Caco-2 (cell line): ENCODE measurements at regions of chr4 and their contacts with region 1.

Region 1: GRCh38 chr4:108018040-108018883 is 28.6 kb downstream of the HADH start:
- DNase-seq: peak; percentile 69 to 76
- H3K4me3 ChIP-seq: no peak overlapping the region
- H3K4me3 Mint-ChIP-seq: no peak overlapping the region
- H3K27ac Mint-ChIP-seq: no peak overlapping the region
- H3K4me1 ChIP-seq: no peaks in the 10 kb centered on the region
- H3K4me1 Mint-ChIP-seq: no peaks in the 10 kb centered on the region
- H3K27me3 ChIP-seq: no peaks in the 10 kb centered on the region
- H3K27me3 Mint-ChIP-seq: no peaks in the 10 kb centered on the region
- CTCF ChIP-seq: peak; percentile 69 to 70

Region 2: GRCh38 chr4:108181704-108182103 is 163.4 kb after region 1 on chr4:
- CTCF ChIA-PET with region 1: interaction called, 3 read pairs
- POLR2A ChIA-PET with region 1: no interaction called
- intact Hi-C with region 1: loop called (anchors 2 kb)
- DNase-seq: no peak
- H3K4me3 ChIP-seq: no peak overlapping the region
- H3K4me3 Mint-ChIP-seq: no peak overlapping the region
- H3K27ac Mint-ChIP-seq: no peak overlapping the region
- H3K4me1 ChIP-seq: no peaks in the 10 kb centered on the region
- H3K4me1 Mint-ChIP-seq: no peaks in the 10 kb centered on the region
- H3K27me3 ChIP-seq: no peaks in the 10 kb centered on the region
- H3K27me3 Mint-ChIP-seq: peaks cover 8% of the 10 kb centered on the region
- CTCF ChIP-seq: peak; percentile 41 to 45

Region 3: DNA sequence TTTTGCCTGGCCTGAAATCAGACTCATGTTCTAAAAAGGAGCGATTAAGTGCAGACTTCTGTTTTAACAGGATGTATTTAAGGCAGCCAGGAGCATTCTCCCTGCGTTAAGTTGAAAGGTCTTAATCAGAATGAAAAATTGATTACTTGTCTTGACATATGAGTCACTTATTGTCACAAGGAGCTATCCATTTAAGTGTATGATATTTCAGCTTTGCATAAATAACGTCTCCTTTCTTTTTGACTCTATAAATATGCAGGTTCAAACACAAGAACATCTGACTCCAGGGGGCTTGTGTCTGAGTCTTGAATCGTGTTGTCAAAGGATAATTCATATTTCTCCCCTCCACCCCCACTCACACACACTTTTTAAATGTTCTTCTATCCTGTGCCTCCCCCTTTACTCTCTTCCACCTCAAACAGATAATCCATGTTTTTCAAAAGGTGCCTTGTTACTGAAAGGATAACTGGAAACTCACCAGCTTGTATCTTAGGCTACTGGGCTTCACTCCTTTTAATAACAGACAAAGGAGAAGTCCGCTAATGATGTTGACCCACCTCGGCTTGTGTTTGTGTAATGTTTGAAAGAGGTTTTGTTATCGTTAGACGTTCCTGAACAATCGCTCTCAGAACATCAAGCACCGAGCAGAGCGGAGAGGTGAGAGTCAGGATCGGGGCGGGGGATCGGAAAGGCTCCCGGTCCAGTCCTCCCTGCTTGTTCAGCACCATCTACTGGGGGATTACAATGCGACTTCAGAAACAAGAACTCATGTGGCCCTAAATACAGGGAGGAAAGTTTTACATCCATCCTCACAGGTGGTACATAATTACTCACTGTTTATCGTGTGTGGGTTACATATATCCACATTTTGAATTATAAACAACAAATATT is 494.6 kb after region 1 on chr4:
- CTCF ChIA-PET with region 1: interaction called, 8 read pairs
- POLR2A ChIA-PET with region 1: no interaction called
- intact Hi-C with region 1: loop called (anchors 1 kb)
- DNase-seq: peak; percentile 63 to 65
- H3K4me3 ChIP-seq: no peak overlapping the region
- H3K4me3 Mint-ChIP-seq: peak overlapping the region; percentile 47
- H3K27ac Mint-ChIP-seq: no peak overlapping the region
- H3K4me1 ChIP-seq: no peaks in the 10 kb centered on the region
- H3K4me1 Mint-ChIP-seq: no peaks in the 10 kb centered on the region
- H3K27me3 ChIP-seq: no peaks in the 10 kb centered on the region
- H3K27me3 Mint-ChIP-seq: peaks cover 13% of the 10 kb centered on the region
- CTCF ChIP-seq: peak; percentile 35 to 58

Region 4: DNA sequence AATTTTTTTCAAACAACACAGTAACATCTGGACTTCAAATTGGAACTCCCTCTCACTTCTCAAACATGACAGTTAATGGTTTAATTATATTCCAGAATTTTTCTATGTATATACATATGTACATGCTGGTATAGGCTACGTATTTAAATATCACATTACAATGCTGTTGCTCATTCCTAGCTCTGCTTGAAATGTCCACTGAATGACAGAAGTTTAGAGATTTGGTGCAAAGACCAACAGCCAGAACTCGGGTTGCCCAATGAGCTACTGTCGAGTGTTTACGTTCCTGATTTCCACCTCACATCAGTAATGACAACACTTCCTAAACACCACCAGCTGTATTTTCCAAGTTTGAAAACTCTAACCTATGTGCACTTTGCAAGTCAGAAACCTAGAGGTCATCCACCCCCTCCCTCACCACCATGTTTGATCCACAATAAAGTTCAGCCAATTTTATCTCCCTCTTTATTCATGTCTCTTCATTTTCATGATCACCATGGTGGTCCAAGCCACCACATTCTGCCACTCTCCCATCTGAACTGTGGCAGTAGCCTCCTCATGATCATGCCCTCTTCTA is 552.8 kb after region 1 on chr4:
- CTCF ChIA-PET with region 1: interaction called, 13 read pairs
- POLR2A ChIA-PET with region 1: no interaction called
- intact Hi-C with region 1: loop called (anchors 1 kb)
- DNase-seq: no peak
- H3K4me3 ChIP-seq: no peak overlapping the region
- H3K4me3 Mint-ChIP-seq: no peak overlapping the region
- H3K27ac Mint-ChIP-seq: no peak overlapping the region
- H3K4me1 ChIP-seq: no peaks in the 10 kb centered on the region
- H3K4me1 Mint-ChIP-seq: peaks cover 6% of the 10 kb centered on the region
- H3K27me3 ChIP-seq: no peaks in the 10 kb centered on the region
- H3K27me3 Mint-ChIP-seq: peaks cover 3% of the 10 kb centered on the region
- CTCF ChIP-seq: no peak